ENCODE measurements at regions of chr6 and their contacts with region 1.

Region 1: DNA sequence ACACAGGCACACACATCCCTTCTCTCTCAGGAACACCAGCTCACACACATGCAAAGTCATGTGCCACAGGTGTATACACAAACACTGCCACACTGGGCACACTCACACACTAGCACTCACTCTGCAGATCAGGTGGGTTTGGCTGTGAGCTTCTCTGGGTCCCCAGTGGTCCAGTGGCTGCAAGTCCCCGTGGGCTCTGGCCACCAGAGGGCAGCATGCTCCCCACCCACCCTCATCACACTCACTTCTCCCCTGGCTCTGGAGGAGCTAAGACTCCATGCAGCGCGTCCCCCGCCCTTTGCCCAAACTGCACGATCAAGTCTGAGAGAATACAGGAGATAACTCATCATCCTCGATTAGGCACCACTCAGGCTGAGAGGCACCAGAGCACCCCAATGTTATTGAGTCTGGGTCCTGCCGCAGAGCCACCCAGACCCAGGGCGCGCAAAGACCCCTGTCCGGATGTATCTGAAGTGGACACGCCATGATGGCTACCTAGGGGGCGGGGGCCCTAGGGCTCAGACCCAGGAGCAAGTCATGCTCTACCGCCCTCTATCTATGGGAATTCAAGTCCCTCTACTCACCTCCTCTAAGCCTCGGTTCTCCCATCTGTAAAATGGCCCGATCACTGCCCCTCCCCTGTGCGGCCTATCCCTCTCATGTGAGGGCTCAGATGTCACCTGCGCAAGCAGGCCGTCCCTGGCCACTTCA is 90.5 kb downstream of the GRM4 start:
- H3K4me3 ChIP-seq: no peak overlapping the region
- H3K27ac ChIP-seq: no peak overlapping the region
- H3K4me1 ChIP-seq: no peaks in the 10 kb centered on the region
- CTCF ChIP-seq: peak; percentile 85

Region 2: GRCh38 chr6:34036357-34037069 is 18.9 kb before region 1 on chr6:
- CTCF ChIA-PET with region 1: interaction called, 16 read pairs
- POLR2A ChIA-PET with region 1: no interaction called
- H3K4me3 ChIP-seq: no peak overlapping the region
- H3K27ac ChIP-seq: no peak overlapping the region
- H3K4me1 ChIP-seq: no peaks in the 10 kb centered on the region
- CTCF ChIP-seq: no peak

Region 3: GRCh38 chr6:34044945-34045595 is 10.3 kb before region 1 on chr6:
- CTCF ChIA-PET with region 1: interaction called, 18 read pairs
- POLR2A ChIA-PET with region 1: no interaction called
- H3K4me3 ChIP-seq: no peak overlapping the region
- H3K27ac ChIP-seq: no peak overlapping the region
- H3K4me1 ChIP-seq: no peaks in the 10 kb centered on the region
- CTCF ChIP-seq: no peak

Region 4: GRCh38 chr6:34067814-34068213 is 12.4 kb after region 1 on chr6:
- CTCF ChIA-PET with region 1: interaction called, 25 read pairs
- POLR2A ChIA-PET with region 1: no interaction called
- H3K4me3 ChIP-seq: no peak overlapping the region
- H3K27ac ChIP-seq: no peak overlapping the region
- H3K4me1 ChIP-seq: no peaks in the 10 kb centered on the region
- CTCF ChIP-seq: no peak

Region 5: GRCh38 chr6:34135541-34135940 is 80.2 kb after region 1 on chr6:
- CTCF ChIA-PET with region 1: interaction called, 19 read pairs
- POLR2A ChIA-PET with region 1: no interaction called
- H3K4me3 ChIP-seq: no peak overlapping the region
- H3K27ac ChIP-seq: no peak overlapping the region
- H3K4me1 ChIP-seq: no peaks in the 10 kb centered on the region
- CTCF ChIP-seq: no peak

Region 6: DNA sequence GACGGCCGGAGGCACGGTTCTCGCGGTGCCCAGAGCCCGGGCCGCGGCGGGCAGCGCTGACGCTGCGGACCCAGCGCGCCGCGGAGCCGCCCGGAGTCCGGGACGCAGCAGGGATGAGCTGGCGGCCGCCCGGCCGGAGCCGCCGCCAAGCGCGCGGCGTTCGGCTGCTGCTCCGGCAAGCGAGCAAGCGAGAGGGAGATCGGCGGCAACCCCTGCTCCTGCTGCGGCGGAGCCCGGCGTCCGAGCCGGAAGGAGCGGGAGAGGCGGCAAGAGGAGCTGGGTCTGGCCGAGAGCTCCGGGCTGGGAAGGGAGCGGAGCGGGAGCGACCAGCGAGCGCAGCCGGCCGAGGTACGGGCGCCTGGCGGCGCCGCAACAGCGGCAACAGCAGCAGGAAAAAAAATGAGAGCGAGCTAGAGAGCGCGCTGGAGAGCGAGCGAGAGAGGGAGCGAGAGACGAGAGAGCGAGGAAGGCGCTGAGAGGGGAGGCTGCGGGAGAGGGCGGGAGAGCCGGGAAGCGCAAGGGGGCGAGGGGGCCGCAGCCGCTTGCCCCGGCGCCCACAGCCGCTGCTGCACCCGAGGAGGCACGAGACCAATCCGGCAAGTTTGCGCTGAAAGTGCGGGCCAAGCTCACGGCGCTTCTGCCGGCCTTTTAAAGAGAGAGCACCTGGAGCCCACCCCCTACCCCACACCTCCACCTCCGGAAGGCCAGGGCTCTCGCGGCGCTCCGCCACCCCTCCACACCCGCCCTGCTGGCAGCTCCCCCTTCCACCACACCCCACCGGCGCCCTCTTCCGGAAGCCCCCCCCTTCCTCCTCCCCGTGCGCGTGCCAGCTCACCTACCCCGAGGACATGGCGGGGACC is 90.0 kb after region 1 on chr6:
- CTCF ChIA-PET with region 1: interaction called, 23 read pairs
- POLR2A ChIA-PET with region 1: interaction called, 3 read pairs
- H3K4me3 ChIP-seq: peak overlapping the region; percentile 45
- H3K27ac ChIP-seq: peak overlapping the region; percentile 16; the same call in 1 of the 2 replicates
- H3K4me1 ChIP-seq: peaks cover 11% of the 10 kb centered on the region
- CTCF ChIP-seq: peak; percentile 73

Region 7: DNA sequence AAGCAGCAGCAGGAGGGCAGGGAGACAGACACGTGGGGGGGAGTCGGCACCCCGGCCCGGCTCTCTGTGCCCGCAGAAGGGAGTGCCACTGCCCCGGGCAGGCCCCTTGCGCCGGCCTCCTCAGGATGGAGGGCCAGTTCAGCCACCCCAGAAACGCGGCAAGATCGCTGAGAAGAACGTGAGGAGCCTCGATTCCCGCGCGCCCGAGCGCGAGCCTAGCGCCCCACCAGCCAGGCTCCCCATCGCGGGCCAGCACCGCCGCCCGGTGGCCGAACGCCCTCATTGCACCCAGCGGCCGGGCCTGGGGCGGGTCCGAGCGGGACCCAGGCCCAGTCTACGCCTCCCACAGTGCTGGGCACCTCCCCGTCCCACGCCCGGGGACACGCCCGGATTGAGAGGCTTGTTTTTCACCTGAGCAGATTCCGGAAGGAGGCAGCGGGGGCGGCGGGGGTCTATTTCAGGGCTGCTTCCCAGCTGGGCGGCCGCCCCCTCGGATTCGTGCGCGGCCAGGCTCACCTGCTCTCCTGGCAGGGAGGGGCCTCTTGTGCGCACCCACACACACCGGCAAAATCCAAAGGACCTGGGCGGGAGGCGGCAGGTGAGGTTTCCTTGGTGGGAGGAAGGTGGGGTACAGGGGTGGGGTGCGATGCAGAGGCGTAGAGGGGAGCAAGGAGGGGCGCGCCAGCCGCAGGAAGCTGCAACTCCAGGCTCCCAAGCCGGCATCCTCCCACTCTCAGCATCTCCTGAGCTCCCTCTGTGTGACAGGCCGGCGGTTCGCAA is 99.5 kb after region 1 on chr6:
- CTCF ChIA-PET with region 1: interaction called, 120 read pairs
- POLR2A ChIA-PET with region 1: interaction called, 3 read pairs
- H3K4me3 ChIP-seq: peak overlapping the region; percentile 20
- H3K27ac ChIP-seq: no peak overlapping the region
- H3K4me1 ChIP-seq: no peaks in the 10 kb centered on the region
- CTCF ChIP-seq: peak; percentile 95

Measured in HEK293 (cell line).